MCF 10A (cell line): ENCODE measurements at regions of chr2 and their contacts with region 1.

Region 1: GRCh38 chr2:200525882-200526651 is at the start of gene SGO2:
- DNase-seq: peak; percentile 96
- H3K4me3 Mint-ChIP-seq: peak within 1 kb of the TSS; percentile 74
- H3K27ac Mint-ChIP-seq: peak within 1 kb of the TSS; percentile 47
- H3K4me1 Mint-ChIP-seq: peaks cover 23% of the 10 kb centered on the region
- H3K27me3 Mint-ChIP-seq: no peaks in the 10 kb centered on the region
- CTCF ChIP-seq: no peak
- total RNA-seq, gene SGO2: 9.5 and 14.2 TPM in 2 replicates

Region 2: DNA sequence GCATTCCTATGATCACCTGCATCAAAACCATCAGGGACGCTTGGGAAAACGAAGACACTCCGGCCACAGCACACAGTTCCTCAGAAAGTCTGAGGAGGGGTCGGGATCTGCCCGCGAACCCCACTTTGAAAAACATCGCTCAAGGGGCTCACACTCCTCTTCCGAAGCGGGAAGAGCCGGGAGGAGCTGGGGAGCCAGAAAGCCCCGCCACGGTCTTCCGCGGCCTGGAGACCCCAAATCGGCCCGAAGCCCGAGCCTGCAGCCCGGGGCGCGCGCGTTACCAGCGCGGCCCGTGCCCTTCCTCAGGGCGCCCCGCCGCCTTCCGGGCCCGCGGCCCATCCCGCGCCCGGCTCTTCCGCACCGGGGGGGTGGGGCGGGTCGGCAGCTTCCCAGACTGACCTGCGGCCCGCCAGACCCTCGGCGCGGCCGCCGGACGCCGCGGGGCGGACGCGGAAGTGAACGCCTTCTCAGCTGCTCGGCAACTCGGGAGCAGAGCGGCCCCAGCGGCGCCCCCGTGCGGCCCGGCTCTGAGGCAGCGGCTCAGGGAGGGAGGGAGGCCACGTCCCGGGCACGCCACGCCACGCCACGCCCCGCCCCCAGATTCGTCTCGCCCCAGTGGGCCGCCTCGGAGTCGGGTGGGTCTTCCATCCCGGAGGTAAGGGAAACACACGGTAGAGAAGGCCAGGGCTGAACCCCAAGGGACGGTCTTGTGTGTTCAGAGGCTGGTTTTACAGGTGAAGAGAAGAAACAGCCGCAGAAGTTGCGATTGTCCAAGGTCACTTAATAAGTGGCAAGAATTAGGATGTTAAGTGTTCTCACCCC is 16.2 kb before region 1 on chr2 and contains the start of gene KCTD18:
- CTCF ChIA-PET with region 1: interaction called, 27 read pairs
- POLR2A ChIA-PET with region 1: interaction called, 21 read pairs
- intact Hi-C with region 1: no loop called
- DNase-seq: peak; percentile 80
- H3K4me3 Mint-ChIP-seq: peak within 1 kb of the TSS; percentile 82
- H3K27ac Mint-ChIP-seq: peak within 1 kb of the TSS; percentile 76
- H3K4me1 Mint-ChIP-seq: peaks cover 9% of the 10 kb centered on the region
- H3K27me3 Mint-ChIP-seq: no peaks in the 10 kb centered on the region
- CTCF ChIP-seq: peak; percentile 75
- total RNA-seq, gene KCTD18: 13.3 and 13.5 TPM in 2 replicates

Region 3: DNA sequence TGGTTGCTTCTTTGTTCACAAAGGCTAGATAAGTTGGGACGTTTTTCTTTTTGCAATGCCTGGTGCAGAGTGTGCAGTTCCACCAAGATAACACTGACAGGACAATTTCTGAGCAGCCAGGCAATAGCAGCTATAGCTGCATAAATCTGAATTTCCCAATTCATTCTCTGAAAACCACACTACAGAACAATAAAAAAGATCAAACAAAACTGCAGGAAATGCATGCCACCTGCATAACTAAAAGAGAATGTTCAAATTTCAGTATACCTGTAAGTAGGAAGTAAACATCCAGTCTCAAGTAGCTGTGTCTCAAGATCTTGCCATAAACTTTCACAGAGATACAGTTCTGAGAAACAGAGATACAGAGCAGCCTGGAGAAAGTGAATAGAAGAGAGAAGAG is 10.9 kb before region 1 on chr2:
- CTCF ChIA-PET with region 1: interaction called, 27 read pairs
- POLR2A ChIA-PET with region 1: interaction called, 21 read pairs
- intact Hi-C with region 1: no loop called
- DNase-seq: no peak
- H3K4me3 Mint-ChIP-seq: no peak overlapping the region
- H3K27ac Mint-ChIP-seq: no peak overlapping the region
- H3K4me1 Mint-ChIP-seq: no peaks in the 10 kb centered on the region
- H3K27me3 Mint-ChIP-seq: no peaks in the 10 kb centered on the region
- CTCF ChIP-seq: no peak